Esophagus squamous epithelium (tissue), 5 donors: ENCODE measurements at regions of chr15 and their contacts with region 1.

Region 1: GRCh38 chr15:72599855-72600464 is 54.5 kb upstream of the GOLGA6B start:
- DNase-seq: no peak
- H3K4me3 ChIP-seq: no peak overlapping the region
- H3K27ac ChIP-seq: no peak overlapping the region
- H3K4me1 ChIP-seq: no peaks in the 10 kb centered on the region
- H3K27me3 ChIP-seq: no peaks in the 10 kb centered on the region
- CTCF ChIP-seq: peak in 5 of 6 experiments; percentile 42 to 59 (median 54)
- POLR2A ChIP-seq: no peak

Region 2: DNA sequence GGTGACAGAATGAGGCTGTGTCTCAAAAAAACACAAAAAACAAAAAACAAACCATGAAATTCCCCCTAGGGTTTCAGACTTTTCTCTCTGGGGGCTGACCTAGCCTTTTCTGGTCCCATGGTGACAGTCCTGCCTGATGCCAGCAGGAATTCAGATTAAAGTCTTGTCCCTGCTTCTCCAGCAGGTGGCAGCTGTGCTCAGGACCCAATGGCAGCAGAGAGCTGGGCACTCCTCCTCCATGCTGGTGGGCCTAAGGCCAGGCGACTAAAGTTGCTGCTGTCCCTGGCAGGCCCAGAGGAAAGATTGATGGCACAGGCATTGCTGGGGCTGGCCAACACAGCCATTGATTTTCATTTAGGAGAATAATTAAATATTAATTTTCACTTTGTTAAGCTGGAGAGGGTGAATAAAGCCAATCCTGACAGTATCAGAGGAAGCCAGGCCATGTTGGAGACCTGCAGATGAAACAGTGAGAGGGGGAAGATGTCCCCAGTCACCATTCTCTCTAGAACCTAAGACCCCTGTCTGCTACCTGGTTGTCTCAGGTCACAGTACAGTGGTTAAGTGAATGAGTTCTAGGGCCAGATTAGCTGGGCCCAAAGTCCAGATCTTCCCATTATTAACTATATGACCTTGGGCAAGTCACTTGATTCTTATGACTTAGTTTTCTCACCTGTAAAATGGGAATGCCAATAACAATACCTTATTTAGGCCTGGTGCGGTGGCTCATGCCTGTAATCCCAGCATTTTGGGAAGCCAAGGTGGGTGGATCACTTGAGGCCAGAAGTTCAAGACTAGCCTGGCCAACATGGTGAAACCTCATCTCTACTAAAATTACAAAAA is 287.1 kb before region 1 on chr15:
- intact Hi-C with region 1: loop called (anchors 10 kb)
- DNase-seq: no peak
- H3K4me3 ChIP-seq: no peak overlapping the region
- H3K27ac ChIP-seq: no peak overlapping the region
- H3K4me1 ChIP-seq: no peaks in the 10 kb centered on the region
- H3K27me3 ChIP-seq: no peaks in the 10 kb centered on the region
- CTCF ChIP-seq: peak; percentile 46 to 81 (median 69)
- POLR2A ChIP-seq: no peak